Heart right ventricle (tissue), 16 donors: ENCODE measurements at regions of chr1 and their contacts with region 1.

Region 1: DNA sequence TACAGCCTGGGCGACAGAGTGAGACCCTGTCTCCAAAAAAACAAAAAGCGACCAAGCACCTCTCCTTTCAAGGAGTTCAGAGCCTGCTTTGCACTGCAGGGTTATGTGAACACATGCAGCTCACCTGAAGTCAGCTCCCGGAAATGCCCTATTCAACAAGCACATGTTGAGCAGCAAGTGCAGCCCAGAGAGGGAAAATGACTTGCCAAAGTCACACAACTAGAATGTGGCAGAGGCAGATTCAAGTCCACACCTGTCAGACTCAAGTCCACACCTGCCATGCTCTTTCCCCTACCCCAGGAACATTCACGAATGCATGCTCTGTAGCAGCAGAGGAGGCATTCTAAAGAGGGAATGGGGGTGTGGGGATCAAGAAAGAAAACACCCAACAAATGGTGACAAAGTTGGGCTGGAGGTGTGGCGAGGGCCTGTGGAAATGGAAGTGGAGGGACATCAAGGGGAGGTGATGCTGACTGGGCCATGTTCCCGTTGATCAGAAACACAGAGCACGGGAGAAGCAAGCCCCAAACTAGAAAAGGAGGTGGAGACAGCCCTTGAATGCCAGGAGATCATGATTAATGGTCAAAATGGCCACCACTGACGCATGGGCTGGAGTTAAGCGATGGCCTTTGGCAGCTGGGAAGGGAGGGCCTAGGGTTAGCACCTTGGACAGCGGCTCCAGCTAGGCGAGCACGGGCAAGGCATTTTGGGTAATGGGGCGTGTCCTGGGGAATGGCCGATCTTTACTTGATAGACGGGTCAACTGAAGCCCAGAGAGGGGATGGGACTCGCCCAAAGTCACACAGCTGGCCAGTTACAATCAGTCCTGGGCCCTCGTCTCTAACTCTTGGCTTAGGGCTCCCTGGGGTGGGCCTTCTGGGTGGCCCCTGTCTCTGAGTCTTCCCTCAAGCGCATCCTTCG is 21.5 kb downstream of the RAP1GAP start:
- DNase-seq: peak in 1 of 2 donors; percentile 36
- ATAC-seq: peak in 5 of 8 donors; percentile 42 to 60 (median 59)
- H3K4me3 ChIP-seq: no peak overlapping the region
- H3K27ac ChIP-seq: no peak overlapping the region
- H3K4me1 ChIP-seq: peaks cover 6 to 8% (median 7%) of the 10 kb centered on the region in 9 donors
- H3K27me3 ChIP-seq: peaks cover 0 to 43% (median 14%) of the 10 kb centered on the region in 7 donors
- CTCF ChIP-seq: no peak

Region 2: DNA sequence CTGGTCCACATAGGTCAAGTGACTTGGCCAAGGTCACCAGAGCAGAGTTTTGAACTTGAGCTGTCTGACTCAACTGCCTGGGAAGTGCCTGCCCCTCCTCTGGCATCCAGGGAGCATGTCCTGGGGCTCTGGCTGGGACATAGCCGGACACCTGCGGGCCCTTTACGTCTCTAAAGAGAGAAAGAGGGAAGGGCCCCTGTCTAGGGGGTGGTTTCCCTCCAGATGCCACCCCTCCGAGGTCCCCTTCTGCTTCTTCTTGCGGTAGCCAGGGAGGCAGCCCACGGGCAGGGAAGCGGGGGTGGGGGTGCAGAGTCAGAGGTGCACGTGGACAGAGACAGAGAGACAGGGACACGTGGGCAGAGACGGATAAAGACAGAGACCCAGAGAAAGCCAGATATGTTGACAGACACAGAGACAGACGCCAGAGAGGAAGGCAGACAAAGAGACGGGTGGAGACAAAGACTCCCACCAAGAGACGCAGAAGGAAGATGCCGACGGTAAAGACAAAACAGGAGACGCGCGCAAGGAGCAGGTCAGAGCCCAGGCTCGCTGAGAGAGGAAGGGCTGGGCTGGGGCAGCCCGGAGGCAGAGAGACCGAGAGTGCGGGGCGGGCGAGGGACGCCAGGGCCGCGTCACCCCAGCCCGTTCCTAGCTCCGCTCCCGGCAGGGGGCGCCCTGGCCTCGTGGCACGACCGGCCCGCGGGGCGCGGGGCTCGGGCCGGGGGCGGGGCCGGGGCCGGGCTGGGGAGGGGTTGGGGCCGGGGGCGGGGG is 138.9 kb before region 1 on chr1:
- intact Hi-C with region 1: loop called in 5 of 10 experiments (anchors 5 to 10 kb)
- DNase-seq: peak; percentile 68 to 77
- ATAC-seq: peak; percentile 78 to 89 (median 85)
- H3K4me3 ChIP-seq: peak overlapping the region in 9 of 10 donors; percentile 29 to 60 (median 52)
- H3K27ac ChIP-seq: peak overlapping the region in 3 of 10 donors; percentile 17 to 70 (median 47)
- H3K4me1 ChIP-seq: peaks cover 10 to 43% (median 23%) of the 10 kb centered on the region in 9 donors
- H3K27me3 ChIP-seq: peaks cover 0 to 49% (median 20%) of the 10 kb centered on the region in 7 donors
- CTCF ChIP-seq: peak; percentile 47 to 73 (median 64)

Region 3: DNA sequence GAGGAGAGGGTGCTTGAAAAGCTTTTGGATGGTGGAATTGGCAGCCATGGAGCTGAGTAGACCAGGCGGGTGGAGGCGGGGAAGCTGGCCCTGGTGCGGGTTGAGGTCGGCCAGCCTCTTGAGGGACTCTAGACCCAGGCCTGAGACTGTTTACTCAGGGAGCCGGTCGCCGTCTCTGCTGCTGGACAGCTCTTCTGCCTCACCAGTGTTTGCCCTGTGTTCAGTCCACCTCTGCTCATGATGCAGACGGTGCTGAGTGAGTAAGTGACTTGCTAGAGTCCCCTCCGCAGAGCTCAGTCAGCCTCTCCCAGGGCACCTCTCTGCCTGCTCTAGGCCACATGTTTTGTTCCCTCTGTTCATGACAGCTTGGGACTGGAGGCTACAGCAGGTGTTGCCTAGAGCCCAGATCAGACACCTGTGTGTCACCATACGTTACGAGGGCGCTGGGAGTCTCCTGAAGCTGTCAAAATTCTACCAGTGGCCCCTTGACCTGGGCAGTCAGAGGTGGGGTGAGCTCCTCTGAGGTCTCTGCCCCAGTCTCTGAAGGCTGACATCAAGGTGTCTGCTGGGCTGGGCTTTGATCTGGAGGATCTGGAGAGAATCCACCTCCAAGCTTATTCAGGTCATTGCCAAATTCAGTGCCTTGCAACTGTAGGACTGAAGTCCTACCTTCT is 568.7 kb after region 1 on chr1:
- intact Hi-C with region 1: no loop called
- DNase-seq: no peak
- ATAC-seq: no peak
- H3K4me3 ChIP-seq: no peak overlapping the region
- H3K27ac ChIP-seq: no peak overlapping the region
- H3K4me1 ChIP-seq: no peaks in the 10 kb centered on the region
- H3K27me3 ChIP-seq: peaks cover under 1 to 68% (median 49%) of the 10 kb centered on the region in 7 donors
- CTCF ChIP-seq: no peak